IMR-90 (cell line): ENCODE measurements at regions of chr16 and their contacts with region 1.

Region 1: GRCh38 chr16:56457927-56458470 is 6.6 kb downstream of the OGFOD1 start:
- DNase-seq: no peak
- ATAC-seq: no peak
- H3K4me3 ChIP-seq: no peak overlapping the region
- H3K27ac ChIP-seq: no peak overlapping the region
- H3K4me1 ChIP-seq: no peaks in the 10 kb centered on the region
- H3K27me3 ChIP-seq: no peaks in the 10 kb centered on the region
- CTCF ChIP-seq: no peak
- POLR2A ChIP-seq: no peak
- RAD21 ChIP-seq: no peak

Region 2: GRCh38 chr16:56470240-56470639 is 12.2 kb after region 1 on chr16:
- CTCF ChIA-PET with region 1: no interaction called
- POLR2A ChIA-PET with region 1: no interaction called
- dilution Hi-C with region 1: no loop called
- in situ Hi-C with region 1: no loop called
- intact Hi-C with region 1: loop called (anchors 2 kb)
- DNase-seq: no peak
- ATAC-seq: no peak
- H3K4me3 ChIP-seq: no peak overlapping the region
- H3K27ac ChIP-seq: no peak overlapping the region
- H3K4me1 ChIP-seq: no peaks in the 10 kb centered on the region
- H3K27me3 ChIP-seq: no peaks in the 10 kb centered on the region
- CTCF ChIP-seq: no peak
- POLR2A ChIP-seq: no peak
- RAD21 ChIP-seq: no peak